ENCODE measurements at regions of chr1 and their contacts with region 1.

Region 1: DNA sequence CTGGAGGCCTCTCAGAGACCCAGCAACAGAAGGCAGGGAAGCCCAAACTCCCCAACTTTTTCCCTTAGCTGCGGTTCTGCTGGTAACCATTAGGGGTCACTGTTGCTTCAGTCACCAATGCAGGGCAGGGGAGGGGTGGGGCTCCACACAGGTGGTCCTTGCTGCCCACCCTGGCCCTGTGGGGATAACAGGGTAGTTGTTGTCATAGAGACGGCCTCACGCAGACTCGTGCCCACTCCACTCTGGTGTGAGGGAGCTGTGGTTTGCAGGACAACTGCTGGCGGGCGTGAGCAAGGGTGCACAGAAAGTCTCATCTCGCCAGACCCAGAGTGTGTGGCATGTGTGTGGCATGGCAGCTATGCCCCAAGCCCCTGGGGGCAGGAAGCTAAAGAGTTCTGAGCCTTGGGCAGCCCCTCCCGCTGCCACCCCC is 19.9 kb downstream of the INSRR start:
- DNase-seq: no peak
- H3K4me3 ChIP-seq: no peak overlapping the region
- CTCF ChIP-seq: peak; percentile 85

Region 2: GRCh38 chr1:156601122-156601830 is 237.7 kb before region 1 on chr1 and contains the start of gene GPATCH4:
- CTCF ChIA-PET with region 1: no interaction called
- POLR2A ChIA-PET with region 1: no interaction called
- DNase-seq: peak; percentile 53
- H3K4me3 ChIP-seq: peak within 1 kb of the TSS; percentile 89
- CTCF ChIP-seq: no peak

Region 3: DNA sequence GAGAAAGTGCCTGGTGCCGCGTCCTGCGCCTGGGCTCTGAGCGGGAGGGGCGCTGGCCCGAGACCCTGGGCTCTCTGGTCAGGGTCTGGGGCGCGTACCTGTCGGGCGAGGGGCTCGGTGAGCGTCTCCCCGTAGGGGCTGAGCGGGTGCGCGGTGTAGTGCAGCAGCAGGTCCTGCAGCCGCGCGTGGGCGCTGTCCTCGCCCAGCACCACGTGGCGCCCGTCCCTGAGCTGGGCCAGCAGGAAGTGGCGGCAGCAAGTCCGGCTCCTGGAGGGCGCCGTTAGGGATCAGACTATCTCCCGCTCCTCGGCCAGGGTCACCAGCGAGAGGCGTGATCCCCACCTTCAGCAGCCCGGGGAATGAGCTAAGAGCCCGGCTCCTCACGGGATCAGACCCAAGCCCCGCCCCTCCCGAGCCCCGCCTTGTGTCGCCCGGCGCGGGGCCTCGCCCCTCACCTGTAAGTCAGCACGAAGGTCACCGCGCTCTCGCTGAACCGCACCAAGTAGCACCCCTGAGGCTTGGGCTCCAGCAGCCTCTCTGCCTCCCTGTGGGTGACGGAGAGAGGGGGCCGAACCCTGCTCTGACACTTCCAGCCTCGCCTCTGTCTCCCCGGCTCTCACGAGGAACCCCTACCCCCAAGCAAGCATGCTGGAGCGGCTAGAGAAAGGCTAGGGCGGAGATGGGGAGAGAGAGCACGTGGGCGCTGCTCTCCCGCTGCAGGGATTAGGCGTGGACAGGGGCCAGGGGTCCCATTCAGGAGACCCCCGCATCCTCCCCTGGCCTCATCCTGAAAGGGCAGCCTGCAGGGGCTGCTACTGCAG is 25.0 kb before region 1 on chr1:
- CTCF ChIA-PET with region 1: interaction called, 30 read pairs
- POLR2A ChIA-PET with region 1: no interaction called
- DNase-seq: no peak
- H3K4me3 ChIP-seq: peak overlapping the region; percentile 33
- CTCF ChIP-seq: peak; percentile 80

Region 4: GRCh38 chr1:156852418-156852874 is 13.4 kb after region 1 on chr1:
- CTCF ChIA-PET with region 1: interaction called, 102 read pairs
- POLR2A ChIA-PET with region 1: no interaction called
- DNase-seq: no peak
- H3K4me3 ChIP-seq: no peak overlapping the region
- CTCF ChIP-seq: no peak

Region 5: GRCh38 chr1:156884560-156885184 is 45.7 kb after region 1 on chr1:
- CTCF ChIA-PET with region 1: interaction called, 121 read pairs
- POLR2A ChIA-PET with region 1: no interaction called
- DNase-seq: no peak
- H3K4me3 ChIP-seq: no peak overlapping the region
- CTCF ChIP-seq: no peak

Region 6: DNA sequence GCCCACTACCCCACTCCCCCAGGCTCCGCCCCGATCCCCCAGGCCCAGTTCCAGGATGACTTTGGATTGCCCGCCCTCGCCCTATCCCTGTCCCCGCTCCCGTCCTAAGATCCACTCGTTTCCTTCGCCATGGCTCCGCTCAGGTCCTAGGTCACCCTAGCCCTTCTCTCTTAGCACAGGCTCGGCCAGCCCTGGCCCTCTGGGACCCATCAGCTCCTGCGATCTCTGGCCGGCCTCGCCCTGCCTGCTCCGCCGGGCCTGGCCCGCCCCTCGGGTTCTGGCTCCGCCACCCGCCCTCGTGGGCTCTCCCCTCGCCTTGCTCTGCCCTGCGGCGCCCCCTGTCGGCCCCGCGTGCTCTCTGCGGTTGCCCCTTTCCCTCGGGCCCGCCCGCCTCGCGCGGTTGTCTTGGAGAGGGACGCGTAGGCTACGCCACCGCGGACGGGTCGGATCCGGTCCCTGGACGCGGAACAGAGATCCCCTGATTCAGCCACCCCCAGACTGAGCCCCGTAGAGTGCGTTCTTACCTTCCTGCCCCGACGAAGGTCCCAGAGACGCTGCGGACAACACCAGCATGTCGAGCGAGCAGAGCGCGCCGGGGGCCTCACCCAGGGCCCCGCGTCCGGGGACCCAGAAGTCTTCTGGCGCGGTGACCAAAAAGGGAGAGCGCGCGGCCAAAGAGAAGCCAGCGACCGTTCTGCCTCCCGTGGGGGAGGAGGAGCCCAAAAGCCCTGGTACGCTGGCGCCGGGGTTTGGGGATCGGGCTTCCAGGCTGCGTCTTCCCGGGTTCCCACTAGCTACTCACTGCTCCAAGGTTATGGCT is 81.4 kb after region 1 on chr1 and contains the start of gene LRRC71:
- CTCF ChIA-PET with region 1: interaction called, 15 read pairs
- POLR2A ChIA-PET with region 1: no interaction called
- DNase-seq: no peak
- H3K4me3 ChIP-seq: peak within 1 kb of the TSS; percentile 30; the same call in 1 of the 2 replicates
- CTCF ChIP-seq: peak; percentile 98